Mammary epithelial cell (primary cell): ENCODE measurements at regions of chr1 and their contacts with region 1.

Region 1: GRCh38 chr1:8197493-8198282 is 120.2 kb upstream of the SLC45A1 start:
- DNase-seq: peak; percentile 94
- H3K4me3 ChIP-seq: no peak overlapping the region
- H3K27ac ChIP-seq: peak overlapping the region; percentile 25
- H3K4me1 ChIP-seq: peaks cover 45% of the 10 kb centered on the region
- H3K27me3 ChIP-seq: no peaks in the 10 kb centered on the region
- CTCF ChIP-seq: no peak

Region 2: DNA sequence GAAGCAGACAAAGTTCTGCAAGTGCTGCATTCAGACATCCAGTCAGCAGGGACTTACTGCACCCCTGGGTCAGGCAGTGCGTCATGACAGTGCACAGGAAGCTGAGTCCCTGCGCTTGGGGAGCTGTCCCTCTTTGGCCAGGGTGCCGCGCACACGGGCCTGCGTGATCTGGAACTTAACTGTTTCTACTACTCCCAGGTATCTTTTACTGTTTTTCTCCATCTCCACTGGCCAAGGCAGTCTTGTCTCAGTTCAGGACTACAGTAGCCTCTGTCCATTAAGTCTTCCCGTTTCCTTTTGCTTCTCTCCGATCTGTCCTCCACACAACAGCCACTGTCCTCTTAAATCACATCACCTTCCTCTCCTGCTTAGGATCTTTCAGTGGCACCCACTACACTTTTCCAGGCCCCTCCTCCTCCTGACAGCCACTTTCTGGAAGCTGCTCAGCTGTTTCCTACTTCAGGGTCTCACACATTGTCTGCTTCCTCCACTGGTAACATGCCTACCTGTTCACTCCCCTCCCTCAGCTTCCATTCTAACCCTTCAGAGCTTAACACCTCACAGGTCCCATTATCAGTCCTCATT is 187.5 kb before region 1 on chr1:
- CTCF ChIA-PET with region 1: no interaction called
- dilution Hi-C with region 1: loop called (anchors 5 kb)
- in situ Hi-C with region 1: no loop called
- intact Hi-C with region 1: no loop called
- DNase-seq: no peak
- H3K4me3 ChIP-seq: no peak overlapping the region
- H3K27ac ChIP-seq: no peak overlapping the region
- H3K4me1 ChIP-seq: peaks cover 26% of the 10 kb centered on the region
- H3K27me3 ChIP-seq: no peaks in the 10 kb centered on the region
- CTCF ChIP-seq: no peak

Region 3: DNA sequence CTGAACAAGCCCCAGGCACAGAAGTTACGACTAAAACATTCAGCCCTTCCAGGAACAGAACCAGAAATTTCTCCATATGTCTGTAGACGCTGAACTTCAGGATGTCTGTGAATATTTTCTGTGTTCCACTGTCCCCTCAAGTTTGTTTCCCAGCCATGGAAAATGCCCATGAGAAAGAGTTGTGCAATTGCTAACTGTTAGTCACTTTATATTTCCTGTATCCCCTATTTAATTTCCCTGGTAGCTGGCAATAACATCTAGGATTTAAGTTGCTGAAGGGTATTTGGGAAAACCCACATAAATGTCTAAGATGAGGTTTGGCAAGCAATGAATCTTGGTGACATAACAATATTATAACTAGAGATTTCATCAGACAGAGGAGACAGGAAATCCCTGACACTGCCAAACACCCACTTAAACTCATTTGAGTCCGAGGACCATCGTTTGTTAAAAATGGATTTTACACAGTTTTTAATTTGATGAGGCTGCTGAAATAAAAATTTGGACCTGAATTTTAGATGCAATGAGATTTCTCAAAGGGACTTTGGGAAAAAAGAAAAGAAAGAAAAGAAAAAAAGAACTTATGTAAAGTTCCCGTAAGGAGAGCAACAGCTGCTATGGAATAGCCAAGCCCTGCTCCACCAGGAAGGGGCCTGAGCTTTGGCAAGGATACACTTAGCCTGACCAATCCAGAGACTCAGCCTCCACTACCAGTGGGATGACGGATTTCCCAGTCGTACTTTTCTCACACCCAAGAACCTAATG is 149.8 kb before region 1 on chr1:
- CTCF ChIA-PET with region 1: no interaction called
- dilution Hi-C with region 1: no loop called
- in situ Hi-C with region 1: no loop called
- intact Hi-C with region 1: no loop called
- DNase-seq: peak; percentile 93
- H3K4me3 ChIP-seq: no peak overlapping the region
- H3K27ac ChIP-seq: peak overlapping the region; percentile 89
- H3K4me1 ChIP-seq: peaks cover 27% of the 10 kb centered on the region
- H3K27me3 ChIP-seq: no peaks in the 10 kb centered on the region
- CTCF ChIP-seq: no peak

Region 4: DNA sequence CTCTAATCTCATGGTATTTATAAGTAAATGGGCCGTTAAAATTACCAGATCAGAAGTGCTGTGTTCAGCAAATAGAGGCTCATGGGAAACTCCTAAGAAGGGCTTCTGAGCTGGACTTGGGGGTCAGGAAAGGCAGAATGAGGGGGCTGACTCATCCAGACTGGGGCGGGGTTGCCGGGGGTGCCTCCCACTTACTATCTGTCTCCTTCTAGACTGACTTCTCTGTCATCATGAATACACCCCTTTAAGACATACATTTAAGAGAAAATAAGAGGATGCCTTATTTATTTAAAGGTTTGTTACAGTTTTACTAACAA is 75.6 kb before region 1 on chr1:
- CTCF ChIA-PET with region 1: no interaction called
- dilution Hi-C with region 1: no loop called
- in situ Hi-C with region 1: no loop called
- intact Hi-C with region 1: no loop called
- DNase-seq: peak; percentile 31
- H3K4me3 ChIP-seq: no peak overlapping the region
- H3K27ac ChIP-seq: no peak overlapping the region
- H3K4me1 ChIP-seq: peaks cover 32% of the 10 kb centered on the region
- H3K27me3 ChIP-seq: no peaks in the 10 kb centered on the region
- CTCF ChIP-seq: no peak

Region 5: GRCh38 chr1:8133657-8134430 is 63.8 kb before region 1 on chr1:
- CTCF ChIA-PET with region 1: no interaction called
- dilution Hi-C with region 1: no loop called
- in situ Hi-C with region 1: no loop called
- intact Hi-C with region 1: loop called (anchors 5 kb)
- DNase-seq: peak; percentile 92
- H3K4me3 ChIP-seq: no peak overlapping the region
- H3K27ac ChIP-seq: peak overlapping the region; percentile 72
- H3K4me1 ChIP-seq: peaks cover 47% of the 10 kb centered on the region
- H3K27me3 ChIP-seq: no peaks in the 10 kb centered on the region
- CTCF ChIP-seq: no peak